Calu3 (cell line): ENCODE measurements at regions of chr17 and their contacts with region 1.

Region 1: GRCh38 chr17:41678907-41679739 is 9.6 kb upstream of the EIF1 start:
- DNase-seq: peak; percentile 80
- H3K4me3 Mint-ChIP-seq: peak overlapping the region; percentile 69
- H3K27ac Mint-ChIP-seq: peak overlapping the region; percentile 96
- H3K4me1 Mint-ChIP-seq: peaks cover 62% of the 10 kb centered on the region
- H3K27me3 Mint-ChIP-seq: no peaks in the 10 kb centered on the region
- CTCF ChIP-seq: peak; percentile 14

Region 2: DNA sequence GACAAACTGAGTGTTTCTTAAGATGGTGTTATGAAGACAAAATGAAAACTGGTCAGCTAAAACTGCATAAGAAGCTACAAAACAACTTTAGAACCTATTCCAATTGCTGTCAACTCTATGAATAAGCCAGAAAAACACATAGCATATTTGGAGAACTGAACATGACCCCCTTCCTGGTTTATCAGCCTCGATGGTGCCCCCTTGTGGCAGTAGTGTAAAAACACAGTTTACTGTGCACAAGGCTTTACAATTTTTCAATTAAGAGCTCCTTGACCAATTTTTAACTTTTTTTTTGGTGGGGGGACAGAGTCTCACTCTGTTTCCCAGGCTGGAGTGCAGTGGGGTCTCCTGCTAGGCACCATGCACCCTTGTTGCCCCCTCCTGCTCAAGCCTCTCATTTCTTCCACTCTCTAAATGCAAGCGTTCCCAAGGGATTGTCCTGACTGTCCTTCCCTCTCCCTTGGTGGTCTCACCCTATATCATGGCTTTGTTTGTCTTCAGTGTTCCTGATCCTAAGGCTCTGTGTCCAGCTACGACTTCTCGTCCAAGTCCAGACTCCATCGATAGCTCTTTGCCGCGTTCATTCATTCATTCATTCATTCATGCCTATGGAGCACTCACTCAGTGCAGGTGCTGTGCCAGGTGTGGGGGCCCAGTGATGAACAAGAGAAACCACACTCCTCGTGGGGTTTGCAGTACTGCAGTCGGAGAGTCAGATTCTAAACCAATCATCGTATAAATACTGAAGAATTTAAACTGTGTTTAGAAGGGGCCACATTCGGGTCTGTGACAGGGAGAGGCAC is 17.0 kb after region 1 on chr17:
- CTCF ChIA-PET with region 1: interaction called, 139 read pairs
- intact Hi-C with region 1: no loop called
- DNase-seq: peak; percentile 84
- H3K4me3 Mint-ChIP-seq: no peak overlapping the region
- H3K27ac Mint-ChIP-seq: peak overlapping the region; percentile 59
- H3K4me1 Mint-ChIP-seq: peaks cover 34% of the 10 kb centered on the region
- H3K27me3 Mint-ChIP-seq: no peaks in the 10 kb centered on the region
- CTCF ChIP-seq: peak; percentile 86